ENCODE measurements at regions of chr11 and their contacts with region 1.

Region 1: GRCh38 chr11:61083601-61084147 is 18.6 kb upstream of the CD5 start:
- DNase-seq: peak in 7 of 9 experiments; percentile 38 to 91 (median 75)
- ATAC-seq: peak; percentile 66
- H3K4me3 ChIP-seq: peak overlapping the region in 1 of 2 experiments; percentile 9
- H3K4me3 Mint-ChIP-seq: peak overlapping the region; percentile 70
- H3K27ac ChIP-seq: peak overlapping the region; percentile 60 to 83
- H3K27ac Mint-ChIP-seq: peak overlapping the region; percentile 97
- H3K4me1 ChIP-seq: peaks cover 52% of the 10 kb centered on the region
- H3K4me1 Mint-ChIP-seq: peaks cover 53% of the 10 kb centered on the region
- H3K27me3 ChIP-seq: no peaks in the 10 kb centered on the region
- H3K27me3 Mint-ChIP-seq: no peaks in the 10 kb centered on the region
- CTCF ChIP-seq: no peak

Region 2: DNA sequence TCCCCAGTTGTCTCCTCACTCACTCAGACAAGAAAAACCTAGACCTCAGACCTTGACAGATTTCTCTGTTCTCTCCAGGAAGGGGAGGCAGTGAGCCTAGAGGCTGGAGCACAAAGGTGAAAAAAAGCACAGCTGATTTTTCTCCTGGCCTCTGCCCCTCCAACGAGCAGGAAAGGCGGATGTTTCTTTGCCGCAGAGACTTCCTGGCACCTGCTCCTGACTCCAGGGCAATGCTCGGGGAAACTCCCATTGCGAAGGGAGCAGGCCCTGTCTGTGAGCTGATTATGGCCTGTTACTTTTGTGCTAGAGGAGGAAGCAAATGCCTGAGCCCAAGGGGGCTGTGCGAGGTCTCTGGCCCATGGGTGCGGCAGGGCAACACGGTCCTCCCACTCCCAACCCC is 273.1 kb before region 1 on chr11:
- CTCF ChIA-PET with region 1: no interaction called
- POLR2A ChIA-PET with region 1: no interaction called
- intact Hi-C with region 1: no loop called
- DNase-seq: no peak
- ATAC-seq: no peak
- H3K4me3 ChIP-seq: no peak overlapping the region
- H3K4me3 Mint-ChIP-seq: no peak overlapping the region
- H3K27ac ChIP-seq: no peak overlapping the region
- H3K27ac Mint-ChIP-seq: no peak overlapping the region
- H3K4me1 ChIP-seq: no peaks in the 10 kb centered on the region
- H3K4me1 Mint-ChIP-seq: no peaks in the 10 kb centered on the region
- H3K27me3 ChIP-seq: no peaks in the 10 kb centered on the region
- H3K27me3 Mint-ChIP-seq: peaks cover 4% of the 10 kb centered on the region
- CTCF ChIP-seq: no peak

Region 3: GRCh38 chr11:61028272-61028761 is 55.4 kb before region 1 on chr11:
- CTCF ChIA-PET with region 1: interaction called, 4 read pairs
- POLR2A ChIA-PET with region 1: interaction called, 11 read pairs
- intact Hi-C with region 1: loop called in 1 of 2 experiments (anchors 2 kb)
- DNase-seq: peak in 8 of 9 experiments; percentile 29 to 80 (median 72)
- ATAC-seq: peak; percentile 19
- H3K4me3 ChIP-seq: peak overlapping the region; percentile 21 to 38
- H3K4me3 Mint-ChIP-seq: peak overlapping the region; percentile 83
- H3K27ac ChIP-seq: peak overlapping the region; percentile 44 to 66
- H3K27ac Mint-ChIP-seq: peak overlapping the region; percentile 95
- H3K4me1 ChIP-seq: peaks cover 61% of the 10 kb centered on the region
- H3K4me1 Mint-ChIP-seq: peaks cover 66% of the 10 kb centered on the region
- H3K27me3 ChIP-seq: no peaks in the 10 kb centered on the region
- H3K27me3 Mint-ChIP-seq: no peaks in the 10 kb centered on the region
- CTCF ChIP-seq: no peak

Region 4: DNA sequence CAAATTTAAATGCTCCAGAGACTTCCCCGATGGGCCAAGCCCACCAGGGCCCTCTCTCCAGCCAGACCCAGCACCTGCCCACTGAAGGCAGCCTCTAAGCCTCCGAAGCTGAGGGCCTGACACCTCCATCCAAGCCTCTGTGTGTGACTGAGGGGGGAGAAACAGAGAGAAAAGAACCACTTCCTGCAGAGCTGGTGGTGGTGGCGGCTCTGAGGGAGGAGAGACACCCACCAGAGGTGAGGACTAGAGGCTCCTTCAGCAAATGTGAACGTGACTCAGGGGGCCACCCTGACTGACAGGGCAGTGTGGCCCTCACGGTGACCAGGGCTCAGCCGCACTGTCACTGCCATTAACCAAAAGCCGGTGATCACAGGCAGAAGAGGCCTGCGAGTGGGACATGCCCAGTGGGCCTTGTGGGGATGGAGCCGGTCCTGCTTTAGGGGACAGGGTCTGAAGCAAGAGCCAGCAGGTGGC is 12.4 kb before region 1 on chr11:
- CTCF ChIA-PET with region 1: interaction called, 11 read pairs
- POLR2A ChIA-PET with region 1: interaction called, 16 read pairs
- intact Hi-C with region 1: no loop called
- DNase-seq: peak; percentile 37 to 87 (median 73)
- ATAC-seq: peak; percentile 98
- H3K4me3 ChIP-seq: no peak overlapping the region
- H3K4me3 Mint-ChIP-seq: peak overlapping the region; percentile 64
- H3K27ac ChIP-seq: peak overlapping the region; percentile 13 to 74
- H3K27ac Mint-ChIP-seq: peak overlapping the region; percentile 94
- H3K4me1 ChIP-seq: peaks cover 76% of the 10 kb centered on the region
- H3K4me1 Mint-ChIP-seq: peaks cover 81% of the 10 kb centered on the region
- H3K27me3 ChIP-seq: no peaks in the 10 kb centered on the region
- H3K27me3 Mint-ChIP-seq: no peaks in the 10 kb centered on the region
- CTCF ChIP-seq: no peak

Region 5: DNA sequence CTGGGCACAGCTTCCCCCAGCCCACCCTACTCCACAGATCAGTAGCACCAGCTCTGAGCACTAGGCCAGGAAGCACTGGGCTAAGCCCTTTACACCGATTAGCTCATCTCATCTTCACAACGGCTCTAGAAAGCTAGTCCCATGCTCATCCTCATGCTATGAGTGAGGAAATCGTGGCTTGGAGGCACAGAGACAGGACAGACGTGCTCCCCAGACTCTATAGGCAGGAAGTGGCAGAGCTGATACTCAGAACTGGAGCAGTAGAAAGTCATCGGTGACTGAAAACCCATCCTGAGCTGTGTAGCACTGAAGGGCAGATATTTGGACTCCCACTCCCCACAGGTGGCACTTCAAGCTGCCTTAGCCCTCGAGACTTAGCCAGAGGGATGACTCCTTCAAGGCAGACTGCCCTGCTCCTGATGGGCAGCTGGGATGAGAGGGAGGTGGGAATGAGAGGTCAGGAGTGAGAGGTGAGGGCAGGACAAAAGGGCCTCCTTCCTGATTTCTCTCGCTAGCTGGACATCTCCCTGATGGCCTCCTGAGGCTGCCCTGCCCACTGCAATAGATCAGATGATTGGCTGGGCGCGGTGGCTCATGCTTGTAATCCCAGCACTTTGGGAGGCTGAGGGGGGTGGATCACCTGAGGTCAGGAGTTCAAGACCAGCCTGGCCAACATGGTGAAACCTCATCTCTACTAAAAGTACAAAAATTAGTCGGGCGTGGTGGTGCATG is 28.3 kb after region 1 on chr11:
- CTCF ChIA-PET with region 1: interaction called, 5 read pairs
- POLR2A ChIA-PET with region 1: interaction called, 19 read pairs
- intact Hi-C with region 1: loop called (anchors 5 kb)
- DNase-seq: peak in 6 of 9 experiments; percentile 48 to 83 (median 66)
- ATAC-seq: peak; percentile 79
- H3K4me3 ChIP-seq: no peak overlapping the region
- H3K4me3 Mint-ChIP-seq: peak overlapping the region; percentile 79
- H3K27ac ChIP-seq: peak overlapping the region; percentile 46 to 91
- H3K27ac Mint-ChIP-seq: peak overlapping the region; percentile 87
- H3K4me1 ChIP-seq: peaks cover 86% of the 10 kb centered on the region
- H3K4me1 Mint-ChIP-seq: peaks cover 91% of the 10 kb centered on the region
- H3K27me3 ChIP-seq: peaks cover 0 to 4% of the 10 kb centered on the region in 2 experiments
- H3K27me3 Mint-ChIP-seq: no peaks in the 10 kb centered on the region
- CTCF ChIP-seq: no peak

Region 6: DNA sequence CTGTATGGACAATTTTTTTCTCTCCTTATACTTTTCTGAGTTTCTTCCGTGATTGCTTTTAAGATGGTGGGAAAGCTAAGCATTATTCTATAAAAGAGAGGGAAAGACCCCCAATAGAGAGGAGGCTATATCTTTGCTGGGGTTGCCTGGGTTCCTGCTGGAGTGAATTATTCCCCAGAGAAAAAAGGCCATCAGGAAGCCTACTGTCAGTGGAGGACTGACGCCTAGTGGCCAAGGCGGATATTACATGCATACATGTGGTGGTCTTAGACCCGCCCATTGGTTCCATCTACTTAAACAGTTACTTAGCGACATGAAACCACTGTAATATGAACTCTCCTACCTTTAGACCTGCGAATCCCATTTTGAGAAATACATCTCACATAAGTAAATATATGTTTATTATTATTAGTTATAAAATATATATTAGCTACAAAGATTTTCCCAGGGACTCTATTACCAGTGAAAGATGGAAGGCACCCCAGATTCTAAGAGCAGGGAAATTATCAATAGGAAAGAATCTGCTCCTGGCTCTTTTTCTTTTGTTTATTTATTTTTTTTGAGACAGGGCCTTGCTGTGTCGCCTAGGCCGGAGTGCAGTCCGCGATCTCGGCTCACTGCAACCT is 103.9 kb after region 1 on chr11:
- CTCF ChIA-PET with region 1: interaction called, 5 read pairs
- POLR2A ChIA-PET with region 1: no interaction called
- intact Hi-C with region 1: loop called (anchors 5 to 10 kb)
- DNase-seq: peak; percentile 64 to 89 (median 83)
- ATAC-seq: peak; percentile 100
- H3K4me3 ChIP-seq: no peak overlapping the region
- H3K4me3 Mint-ChIP-seq: no peak overlapping the region
- H3K27ac ChIP-seq: no peak overlapping the region
- H3K27ac Mint-ChIP-seq: no peak overlapping the region
- H3K4me1 ChIP-seq: no peaks in the 10 kb centered on the region
- H3K4me1 Mint-ChIP-seq: peaks cover 3% of the 10 kb centered on the region
- H3K27me3 ChIP-seq: peaks cover 0 to 3% of the 10 kb centered on the region in 2 experiments
- H3K27me3 Mint-ChIP-seq: no peaks in the 10 kb centered on the region
- CTCF ChIP-seq: peak; percentile 98

Region 7: DNA sequence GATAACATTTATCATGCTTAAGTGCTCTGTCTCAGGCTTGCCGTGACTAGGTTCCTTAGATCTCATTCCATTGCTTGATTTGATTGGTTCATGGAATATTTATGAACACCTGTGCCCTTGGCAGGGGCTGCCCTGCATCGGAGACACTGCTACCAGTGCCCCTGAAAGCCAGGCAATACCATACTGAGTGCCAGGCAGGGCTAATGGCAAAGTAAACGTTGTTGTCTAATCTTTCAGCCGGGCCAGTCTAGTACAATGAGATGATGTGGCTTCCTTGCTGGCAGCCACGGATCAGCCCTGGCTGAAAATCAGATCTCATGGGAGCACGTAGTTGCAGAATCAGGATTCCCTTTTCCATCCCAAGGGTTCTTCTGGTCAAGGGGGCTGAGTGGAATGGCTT is 114.7 kb after region 1 on chr11:
- CTCF ChIA-PET with region 1: no interaction called
- POLR2A ChIA-PET with region 1: no interaction called
- intact Hi-C with region 1: no loop called
- DNase-seq: no peak
- ATAC-seq: no peak
- H3K4me3 ChIP-seq: no peak overlapping the region
- H3K4me3 Mint-ChIP-seq: no peak overlapping the region
- H3K27ac ChIP-seq: no peak overlapping the region
- H3K27ac Mint-ChIP-seq: no peak overlapping the region
- H3K4me1 ChIP-seq: no peaks in the 10 kb centered on the region
- H3K4me1 Mint-ChIP-seq: no peaks in the 10 kb centered on the region
- H3K27me3 ChIP-seq: no peaks in the 10 kb centered on the region
- H3K27me3 Mint-ChIP-seq: peaks cover 24% of the 10 kb centered on the region
- CTCF ChIP-seq: no peak